Cardiac septum (tissue), 1 donor: ENCODE measurements at regions of chr16 and their contacts with region 1.

Region 1: GRCh38 chr16:57984331-57985203 is 13.6 kb upstream of the CNGB1 start:
- DNase-seq: peak; percentile 93

Region 2: GRCh38 chr16:57938936-57939871 is 45.4 kb before region 1 on chr16:
- intact Hi-C with region 1: loop called (anchors 5 kb)
- DNase-seq: peak; percentile 84

Region 3: DNA sequence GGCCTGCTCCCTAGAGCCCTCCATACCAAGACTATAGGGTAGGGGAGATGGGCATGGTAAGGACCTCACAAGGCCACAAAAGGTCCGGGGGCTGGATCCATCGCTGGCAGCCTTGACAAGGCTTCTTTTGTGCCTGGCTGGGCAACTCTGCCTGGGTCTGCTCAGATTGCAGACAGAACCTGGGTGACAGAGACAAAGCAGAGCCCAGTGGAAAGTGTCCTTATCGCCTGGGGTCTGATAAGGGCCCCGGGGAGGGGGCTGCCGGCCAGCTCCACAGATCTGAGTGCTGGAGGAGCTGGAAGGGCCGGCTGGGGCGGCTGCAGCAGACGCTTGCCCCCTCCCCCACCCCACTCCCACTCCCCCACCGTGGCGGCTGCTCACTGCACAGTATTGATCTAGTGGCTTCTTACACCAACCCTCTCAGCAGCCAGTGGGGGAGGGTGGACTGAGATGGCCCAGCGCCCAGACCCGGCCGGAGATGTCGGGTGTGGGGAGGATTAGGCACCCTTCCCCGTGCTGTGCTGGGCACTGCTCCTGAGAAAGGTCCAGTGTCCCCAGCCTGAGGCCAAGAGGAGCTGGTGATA is 48.2 kb after region 1 on chr16:
- intact Hi-C with region 1: no loop called
- DNase-seq: peak; percentile 90

Region 4: GRCh38 chr16:58222532-58223316 is 238.2 kb after region 1 on chr16:
- intact Hi-C with region 1: no loop called
- DNase-seq: no peak